ENCODE measurements at regions of chr1 and their contacts with region 1.

Region 1: GRCh38 chr1:8525558-8526275 is 207.8 kb downstream of the SLC45A1 start:
- DNase-seq: peak; percentile 63 to 67
- H3K4me3 ChIP-seq: peak overlapping the region; percentile 55
- H3K27ac ChIP-seq: peak overlapping the region; percentile 65
- H3K4me1 ChIP-seq: peaks cover 18% of the 10 kb centered on the region
- H3K27me3 ChIP-seq: no peaks in the 10 kb centered on the region
- CTCF ChIP-seq: no peak

Region 2: DNA sequence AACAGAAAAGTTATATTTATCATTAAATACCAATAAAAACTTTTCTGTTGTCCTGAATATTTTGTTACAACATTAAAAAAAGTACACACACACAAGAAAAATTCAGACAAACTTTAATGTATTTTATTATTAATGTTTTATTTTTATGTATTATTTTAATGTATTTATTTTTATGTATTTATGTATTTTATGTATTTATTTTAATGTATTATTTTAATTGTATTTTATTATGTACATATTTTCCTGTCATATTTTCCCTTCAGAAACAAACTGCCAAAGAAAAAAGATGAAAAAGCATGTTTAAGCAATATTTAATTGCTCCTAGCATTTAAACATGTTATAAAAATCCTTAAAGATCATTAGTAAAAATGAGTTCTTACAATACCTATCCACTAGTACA is 69.6 kb after region 1 on chr1:
- CTCF ChIA-PET with region 1: no interaction called
- POLR2A ChIA-PET with region 1: interaction called, 16 read pairs
- intact Hi-C with region 1: no loop called
- DNase-seq: no peak
- H3K4me3 ChIP-seq: no peak overlapping the region
- H3K27ac ChIP-seq: no peak overlapping the region
- H3K4me1 ChIP-seq: no peaks in the 10 kb centered on the region
- H3K27me3 ChIP-seq: no peaks in the 10 kb centered on the region
- CTCF ChIP-seq: no peak